Spleen (tissue), 13 donors: ENCODE measurements at regions of chr1 and their contacts with region 1.

Region 1: DNA sequence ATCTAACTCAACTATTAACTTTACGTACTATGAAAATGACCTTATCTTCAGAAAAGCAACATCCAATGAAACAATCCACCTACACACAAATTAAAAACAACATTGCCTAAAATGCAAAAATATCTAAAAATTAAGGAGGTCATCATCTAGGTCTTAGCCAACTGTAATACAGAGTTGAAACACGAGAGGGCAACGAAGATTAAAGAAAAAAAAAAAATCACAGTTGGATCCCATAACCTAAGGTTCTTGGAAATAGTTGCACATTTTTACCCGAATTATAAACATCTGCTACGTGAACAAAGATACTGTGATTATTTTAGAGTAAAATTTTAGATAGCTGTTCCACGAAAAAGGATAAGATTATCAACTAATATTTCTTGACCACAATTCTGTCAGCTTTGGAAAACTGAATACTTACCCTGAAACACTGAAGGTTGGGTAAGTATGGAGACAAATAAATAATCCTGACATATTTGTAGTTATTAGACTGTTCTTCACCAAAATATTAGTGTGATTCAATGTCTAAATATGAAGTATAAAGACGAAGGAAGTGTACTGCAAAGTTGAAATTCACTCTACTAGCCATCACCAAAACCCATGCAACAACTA is 88.0 kb upstream of the AK4 start:
- DNase-seq: no peak
- H3K4me3 ChIP-seq: no peak overlapping the region
- H3K27ac ChIP-seq: peak overlapping the region in 2 of 8 donors; percentile 12 to 20
- H3K4me1 ChIP-seq: peaks cover 30 to 100% (median 70%) of the 10 kb centered on the region in 6 donors
- H3K27me3 ChIP-seq: no peaks in the 10 kb centered on the region
- CTCF ChIP-seq: peak; percentile 50 to 87 (median 72)
- POLR2A ChIP-seq: no peak

Region 2: DNA sequence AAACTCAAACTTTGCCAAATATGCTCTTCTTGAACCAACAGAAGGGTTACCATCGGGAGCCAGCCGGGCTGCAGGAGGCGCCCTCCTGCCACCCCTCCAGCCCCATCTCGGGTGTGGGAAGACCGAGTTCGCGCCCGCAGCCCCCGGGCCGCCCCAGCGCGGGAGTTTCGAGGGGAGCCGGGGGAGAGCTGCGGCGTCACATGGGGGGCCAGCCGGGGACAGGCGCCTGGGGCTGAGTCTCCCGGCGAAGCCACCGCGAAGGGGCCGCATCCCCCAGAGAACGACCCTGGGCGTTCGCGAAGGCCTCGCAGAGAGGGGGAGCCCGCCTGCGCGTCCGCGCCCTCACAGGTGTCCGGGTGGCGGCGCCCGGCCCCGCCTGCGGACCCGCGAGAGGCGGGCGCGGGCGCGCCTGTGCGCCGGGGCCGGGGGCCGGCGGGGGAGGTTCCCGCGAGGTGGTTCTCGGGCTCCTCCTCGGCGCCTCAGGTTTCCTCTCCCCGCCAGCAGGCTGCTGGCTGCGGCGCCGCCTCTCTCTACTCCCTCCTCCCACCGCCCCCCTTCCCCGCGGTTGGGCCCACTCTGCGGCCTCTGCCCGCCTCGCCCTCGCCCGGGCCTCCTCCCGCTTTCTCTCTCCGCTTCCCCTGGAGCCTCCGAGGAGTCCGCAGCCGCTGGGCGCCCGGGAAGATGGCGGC is 315.4 kb before region 1 on chr1 and contains the start of gene RAVER2:
- intact Hi-C with region 1: no loop called
- DNase-seq: peak; percentile 91
- H3K4me3 ChIP-seq: peak within 1 kb of the TSS; percentile 53 to 77 (median 71)
- H3K27ac ChIP-seq: peak within 1 kb of the TSS; percentile 32 to 86 (median 77)
- H3K4me1 ChIP-seq: peaks cover 0 to 48% (median 30%) of the 10 kb centered on the region in 6 donors
- H3K27me3 ChIP-seq: peaks cover 0 to 4% (median 0%) of the 10 kb centered on the region in 7 donors
- CTCF ChIP-seq: peak in 7 of 11 experiments; percentile 29 to 65 (median 48)
- POLR2A ChIP-seq: no peak
- total RNA-seq, gene RAVER2: 6.7 to 14.1 (median 9.1) TPM

Region 3: GRCh38 chr1:65209005-65209885 is 149.2 kb after region 1 on chr1:
- intact Hi-C with region 1: loop called (anchors 5 kb)
- DNase-seq: no peak
- H3K4me3 ChIP-seq: no peak overlapping the region
- H3K27ac ChIP-seq: no peak overlapping the region
- H3K4me1 ChIP-seq: peaks cover 0 to 13% (median 0%) of the 10 kb centered on the region in 6 donors
- H3K27me3 ChIP-seq: no peaks in the 10 kb centered on the region
- CTCF ChIP-seq: peak in 9 of 11 experiments; percentile 30 to 82 (median 63)
- POLR2A ChIP-seq: no peak

Region 4: DNA sequence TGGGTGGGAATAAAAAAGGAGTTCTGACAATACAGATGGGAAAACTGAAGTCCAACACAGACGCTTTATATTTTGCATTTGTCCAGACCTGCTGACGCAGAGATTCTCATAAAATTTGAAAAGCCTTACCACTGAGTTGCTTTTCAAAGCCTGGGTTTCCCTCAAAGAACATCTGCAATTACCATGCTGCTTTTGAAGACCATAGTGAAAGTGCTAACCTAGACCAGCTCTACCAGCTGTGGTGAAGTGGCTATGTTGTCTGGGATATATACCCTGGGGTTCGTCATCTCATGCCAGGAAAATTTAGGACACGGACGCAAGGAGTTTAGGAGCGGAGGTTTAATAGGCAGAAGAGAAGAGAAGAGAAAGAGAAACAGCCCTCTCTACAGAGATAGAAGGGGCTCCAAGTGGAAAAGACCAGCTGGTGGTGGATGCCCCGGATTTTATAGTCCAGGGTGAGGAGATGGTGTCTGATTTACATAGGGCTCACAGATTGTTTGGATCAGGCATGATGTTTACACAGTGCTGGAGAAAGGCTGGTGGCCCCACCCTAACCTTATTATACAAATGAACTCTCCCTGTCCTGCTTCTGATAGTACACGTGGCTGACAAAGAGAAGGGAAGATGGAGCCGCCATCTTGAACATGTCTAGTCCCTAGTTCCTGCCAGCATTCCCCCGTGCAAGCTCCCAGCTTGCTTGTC is 161.8 kb after region 1 on chr1:
- intact Hi-C with region 1: no loop called
- DNase-seq: no peak
- H3K4me3 ChIP-seq: no peak overlapping the region
- H3K27ac ChIP-seq: no peak overlapping the region
- H3K4me1 ChIP-seq: no peaks in the 10 kb centered on the region
- H3K27me3 ChIP-seq: no peaks in the 10 kb centered on the region
- CTCF ChIP-seq: no peak
- POLR2A ChIP-seq: no peak